Activated CD8-positive, alpha-beta T cell treated with anti-CD3 and anti-CD28 coated beads for 36 hours (primary cell): ENCODE measurements at regions of chr3 and their contacts with region 1.

Region 1: GRCh38 chr3:187227658-187228258 is 30.5 kb downstream of the RTP1 start:
- DNase-seq: no peak
- ATAC-seq: no peak
- H3K4me3 Mint-ChIP-seq: no peak overlapping the region
- H3K27ac Mint-ChIP-seq: no peak overlapping the region
- H3K4me1 Mint-ChIP-seq: no peaks in the 10 kb centered on the region
- H3K27me3 Mint-ChIP-seq: peaks cover 5% of the 10 kb centered on the region
- CTCF ChIP-seq: no peak

Region 2: GRCh38 chr3:187243933-187244524 is 16.3 kb after region 1 on chr3:
- CTCF ChIA-PET with region 1: no interaction called
- POLR2A ChIA-PET with region 1: no interaction called
- intact Hi-C with region 1: no loop called
- DNase-seq: no peak
- ATAC-seq: no peak
- H3K4me3 Mint-ChIP-seq: no peak overlapping the region
- H3K27ac Mint-ChIP-seq: no peak overlapping the region
- H3K4me1 Mint-ChIP-seq: peaks cover 5% of the 10 kb centered on the region
- H3K27me3 Mint-ChIP-seq: peaks cover 1% of the 10 kb centered on the region
- CTCF ChIP-seq: no peak

Region 3: GRCh38 chr3:187377842-187378241 is 150.1 kb after region 1 on chr3:
- CTCF ChIA-PET with region 1: no interaction called
- POLR2A ChIA-PET with region 1: no interaction called
- intact Hi-C with region 1: no loop called
- DNase-seq: no peak
- ATAC-seq: no peak
- H3K4me3 Mint-ChIP-seq: no peak overlapping the region
- H3K27ac Mint-ChIP-seq: no peak overlapping the region
- H3K4me1 Mint-ChIP-seq: no peaks in the 10 kb centered on the region
- H3K27me3 Mint-ChIP-seq: no peaks in the 10 kb centered on the region
- CTCF ChIP-seq: no peak

Region 4: DNA sequence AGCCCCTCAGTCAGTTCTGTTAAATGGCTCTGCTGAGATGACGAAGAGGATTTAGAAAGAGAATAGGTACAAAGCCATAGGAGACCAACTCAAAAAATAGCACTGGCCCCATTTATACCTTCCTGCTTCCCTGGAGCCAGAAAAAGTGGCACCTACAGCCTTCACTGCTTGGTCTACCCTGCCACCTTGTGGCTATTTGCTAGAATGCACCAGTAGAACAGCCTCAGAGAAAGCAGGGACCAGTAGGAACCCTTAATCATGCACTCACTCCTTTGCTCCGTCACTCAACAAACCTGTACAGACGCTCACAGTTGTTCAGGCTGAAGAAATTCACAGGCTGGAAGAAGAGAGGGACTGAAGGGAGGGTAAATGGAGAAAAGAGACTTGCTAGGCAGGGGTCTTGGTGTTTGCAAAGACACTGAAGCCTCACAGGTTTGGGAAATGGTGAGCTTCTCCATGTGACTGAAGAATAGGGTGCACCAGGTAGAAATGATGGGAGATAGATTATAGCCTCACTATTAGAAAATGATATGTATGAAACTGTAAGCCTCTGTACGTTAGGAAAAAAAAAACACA is 486.7 kb after region 1 on chr3:
- CTCF ChIA-PET with region 1: no interaction called
- POLR2A ChIA-PET with region 1: no interaction called
- intact Hi-C with region 1: loop called (anchors 5 kb)
- DNase-seq: peak; percentile 85
- ATAC-seq: peak; percentile 95
- H3K4me3 Mint-ChIP-seq: no peak overlapping the region
- H3K27ac Mint-ChIP-seq: no peak overlapping the region
- H3K4me1 Mint-ChIP-seq: peaks cover 9% of the 10 kb centered on the region
- H3K27me3 Mint-ChIP-seq: no peaks in the 10 kb centered on the region
- CTCF ChIP-seq: peak; percentile 90